ENCODE measurements at regions of chr2 and their contacts with region 1.

Region 1: DNA sequence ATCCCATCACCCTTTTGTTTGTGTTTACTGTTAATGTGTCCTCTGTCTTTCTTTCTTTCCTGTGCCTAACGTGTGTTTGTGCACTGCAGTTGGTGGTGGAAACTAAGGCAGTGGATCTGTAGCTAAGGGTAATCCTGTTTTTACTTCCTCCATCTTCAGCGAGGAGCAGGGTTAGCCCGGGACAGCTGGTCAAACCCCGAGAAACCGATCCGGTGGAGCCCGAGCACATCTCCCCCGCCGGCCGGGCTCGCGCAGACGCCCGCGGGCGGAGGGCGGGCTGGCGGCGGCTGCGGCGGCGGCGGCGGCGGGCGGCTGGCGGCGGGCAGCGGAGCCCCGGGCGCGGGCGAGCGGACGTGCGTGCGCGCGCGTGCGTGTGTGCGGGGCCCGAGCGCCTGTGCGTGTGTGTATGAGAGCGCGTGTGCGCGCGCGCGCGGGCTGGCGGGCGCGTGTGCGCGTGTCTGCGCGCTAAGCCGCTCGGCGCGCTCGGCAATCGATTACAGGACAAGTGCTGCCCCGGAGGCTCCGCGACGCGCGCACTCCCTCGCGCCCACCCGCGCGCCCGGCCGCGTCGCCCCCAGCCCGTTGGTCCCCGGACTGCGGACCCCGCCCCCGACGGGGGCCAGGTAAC is at the start of gene IKZF2:
- DNase-seq: peak; percentile 80 to 93
- ATAC-seq: peak; percentile 72 to 91 (median 79)
- H3K4me3 ChIP-seq: peak within 1 kb of the TSS; percentile 92
- H3K4me3 Mint-ChIP-seq: peak within 1 kb of the TSS; percentile 98
- H3K27ac ChIP-seq: peak within 1 kb of the TSS; percentile 96
- H3K27ac Mint-ChIP-seq: peak within 1 kb of the TSS; percentile 91 to 93
- H3K4me1 ChIP-seq: no peaks in the 10 kb centered on the region
- H3K4me1 Mint-ChIP-seq: peaks cover 55 to 64% of the 10 kb centered on the region in 2 donors
- H3K27me3 ChIP-seq: no peaks in the 10 kb centered on the region
- H3K27me3 Mint-ChIP-seq: no peaks in the 10 kb centered on the region
- CTCF ChIP-seq: no peak
- total RNA-seq, gene IKZF2: 74.4 to 162 (median 133) TPM

Region 2: GRCh38 chr2:212686285-212686895 is 465.2 kb before region 1 on chr2:
- intact Hi-C with region 1: loop called (anchors 1 kb)
- DNase-seq: peak; percentile 49 to 76
- ATAC-seq: peak; percentile 71 to 85 (median 76)
- H3K4me3 ChIP-seq: no peak overlapping the region
- H3K4me3 Mint-ChIP-seq: no peak overlapping the region
- H3K27ac ChIP-seq: no peak overlapping the region
- H3K27ac Mint-ChIP-seq: no peak overlapping the region
- H3K4me1 ChIP-seq: no peaks in the 10 kb centered on the region
- H3K4me1 Mint-ChIP-seq: no peaks in the 10 kb centered on the region
- H3K27me3 ChIP-seq: no peaks in the 10 kb centered on the region
- H3K27me3 Mint-ChIP-seq: peaks cover under 1 to 3% of the 10 kb centered on the region in 2 donors
- CTCF ChIP-seq: peak; percentile 92

Region 3: DNA sequence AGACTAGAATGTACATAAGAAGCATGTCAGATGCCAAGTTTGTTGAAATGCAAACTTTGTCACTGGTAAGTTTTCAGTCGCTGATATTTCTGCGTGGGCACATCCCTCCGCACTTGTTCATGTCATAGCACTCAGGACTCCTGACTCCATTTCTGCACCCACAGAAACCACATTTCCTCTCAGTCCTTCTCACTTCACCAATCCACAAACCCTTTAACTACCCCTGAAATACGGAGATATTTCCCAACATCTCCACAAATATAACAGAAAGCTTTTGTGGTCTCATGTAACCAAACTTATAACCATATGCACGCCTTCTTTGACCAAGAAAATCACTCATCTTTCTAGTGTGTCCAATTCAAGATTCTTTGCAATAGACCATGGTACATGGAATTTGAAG is 336.1 kb before region 1 on chr2:
- intact Hi-C with region 1: loop called (anchors 1 kb)
- DNase-seq: peak in 1 of 2 donors; percentile 38
- ATAC-seq: peak; percentile 43 to 75 (median 61)
- H3K4me3 ChIP-seq: no peak overlapping the region
- H3K4me3 Mint-ChIP-seq: peak overlapping the region; percentile 75
- H3K27ac ChIP-seq: peak overlapping the region; percentile 77
- H3K27ac Mint-ChIP-seq: peak overlapping the region; percentile 91
- H3K4me1 ChIP-seq: peaks cover 30% of the 10 kb centered on the region
- H3K4me1 Mint-ChIP-seq: peaks cover 78 to 79% of the 10 kb centered on the region in 2 donors
- H3K27me3 ChIP-seq: no peaks in the 10 kb centered on the region
- H3K27me3 Mint-ChIP-seq: no peaks in the 10 kb centered on the region
- CTCF ChIP-seq: no peak

Region 4: GRCh38 chr2:212958757-212959295 is 192.7 kb before region 1 on chr2:
- intact Hi-C with region 1: loop called (anchors 5 kb)
- DNase-seq: peak in 1 of 2 donors; percentile 27
- ATAC-seq: peak; percentile 48 to 60 (median 52)
- H3K4me3 ChIP-seq: no peak overlapping the region
- H3K4me3 Mint-ChIP-seq: peak overlapping the region; percentile 89
- H3K27ac ChIP-seq: peak overlapping the region; percentile 70
- H3K27ac Mint-ChIP-seq: peak overlapping the region; percentile 89 to 92
- H3K4me1 ChIP-seq: peaks cover 21% of the 10 kb centered on the region
- H3K4me1 Mint-ChIP-seq: peaks cover 64 to 73% of the 10 kb centered on the region in 2 donors
- H3K27me3 ChIP-seq: no peaks in the 10 kb centered on the region
- H3K27me3 Mint-ChIP-seq: no peaks in the 10 kb centered on the region
- CTCF ChIP-seq: no peak

Region 5: DNA sequence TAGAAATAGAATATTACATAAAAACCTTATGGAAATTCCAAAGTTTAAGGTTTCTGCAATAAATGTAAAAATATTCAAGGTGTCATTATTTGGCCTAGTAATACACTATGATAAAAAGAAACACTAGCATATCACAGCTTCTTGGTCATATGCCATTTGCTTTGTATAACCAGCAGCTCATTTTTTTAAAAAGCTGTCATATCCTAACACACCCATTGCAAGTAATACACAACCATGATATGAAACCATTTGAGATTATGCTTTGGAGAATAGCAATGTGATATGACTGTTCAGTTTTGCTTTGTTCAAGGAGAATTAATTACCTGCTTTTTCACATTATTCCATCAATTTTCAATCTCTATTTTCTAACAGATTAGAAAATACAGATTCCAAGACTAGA is 149.2 kb before region 1 on chr2:
- intact Hi-C with region 1: loop called (anchors 2 kb)
- DNase-seq: no peak
- ATAC-seq: peak; percentile 36 to 62 (median 57)
- H3K4me3 ChIP-seq: no peak overlapping the region
- H3K4me3 Mint-ChIP-seq: no peak overlapping the region
- H3K27ac ChIP-seq: no peak overlapping the region
- H3K27ac Mint-ChIP-seq: peak overlapping the region; percentile 89 to 96
- H3K4me1 ChIP-seq: no peaks in the 10 kb centered on the region
- H3K4me1 Mint-ChIP-seq: peaks cover 35 to 59% of the 10 kb centered on the region in 2 donors
- H3K27me3 ChIP-seq: no peaks in the 10 kb centered on the region
- H3K27me3 Mint-ChIP-seq: no peaks in the 10 kb centered on the region
- CTCF ChIP-seq: no peak

Region 6: DNA sequence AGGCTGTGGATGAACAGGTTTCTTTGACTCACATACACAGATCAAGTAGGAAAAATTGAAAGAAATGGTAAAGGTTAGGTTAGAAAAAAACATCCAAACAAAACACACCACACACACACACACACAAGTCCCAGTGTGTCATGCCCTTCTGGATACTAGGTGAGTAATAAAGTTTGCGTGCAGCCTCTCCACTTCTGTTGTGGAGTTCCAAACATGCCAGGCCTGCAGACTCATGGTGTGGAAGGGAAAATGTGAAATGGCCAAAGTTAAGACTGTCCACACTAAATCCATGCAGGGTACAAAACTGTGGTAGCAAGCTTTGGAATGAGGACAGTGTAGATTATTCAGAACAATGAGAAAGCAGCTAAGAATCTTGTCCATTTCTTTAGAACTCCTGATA is 114.7 kb before region 1 on chr2:
- intact Hi-C with region 1: loop called (anchors 5 kb)
- DNase-seq: no peak
- ATAC-seq: no peak
- H3K4me3 ChIP-seq: no peak overlapping the region
- H3K4me3 Mint-ChIP-seq: peak overlapping the region; percentile 83
- H3K27ac ChIP-seq: peak overlapping the region; percentile 82
- H3K27ac Mint-ChIP-seq: peak overlapping the region; percentile 25 to 94
- H3K4me1 ChIP-seq: peaks cover 24% of the 10 kb centered on the region
- H3K4me1 Mint-ChIP-seq: peaks cover 62% of the 10 kb centered on the region in 2 donors
- H3K27me3 ChIP-seq: no peaks in the 10 kb centered on the region
- H3K27me3 Mint-ChIP-seq: no peaks in the 10 kb centered on the region
- CTCF ChIP-seq: no peak

Region 7: DNA sequence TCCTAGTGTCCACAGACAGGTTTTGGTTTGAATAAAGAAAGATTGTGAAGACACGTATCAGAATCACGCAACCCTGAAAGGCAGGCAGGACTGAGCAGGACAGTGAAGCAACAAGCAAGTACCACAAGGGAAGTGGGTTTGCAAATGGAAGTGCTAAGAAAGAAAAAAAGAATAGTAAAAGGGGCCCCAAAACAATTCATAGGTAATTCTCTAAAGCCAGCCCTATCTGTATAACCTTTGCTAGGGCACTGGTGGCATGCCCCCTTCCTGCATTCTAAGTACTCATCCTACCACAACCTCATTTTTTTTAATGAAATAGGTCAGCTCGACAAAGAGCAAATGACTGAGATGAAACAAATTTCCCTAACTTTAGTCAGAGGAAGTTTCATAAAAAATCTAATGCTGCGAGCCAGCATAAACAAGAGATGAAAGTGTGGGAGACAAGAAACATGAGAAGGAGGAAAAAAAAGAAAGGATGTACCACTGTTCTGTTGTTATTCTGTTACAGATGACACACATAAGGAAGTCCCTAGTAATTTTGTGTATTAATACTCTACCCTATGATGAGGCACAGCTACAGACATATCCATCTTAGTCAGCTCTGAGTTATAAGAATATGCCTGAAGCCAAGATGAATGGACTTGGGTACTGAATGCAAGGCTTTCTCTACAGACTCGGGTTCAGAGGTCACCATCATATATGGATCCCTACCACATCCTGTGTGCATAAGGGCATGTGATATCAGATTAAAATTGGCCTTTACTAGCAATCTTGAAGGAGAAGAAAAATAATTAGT is 32.3 kb before region 1 on chr2:
- intact Hi-C with region 1: loop called (anchors 2 kb)
- DNase-seq: peak; percentile 20 to 57
- ATAC-seq: peak; percentile 82 to 83 (median 82)
- H3K4me3 ChIP-seq: no peak overlapping the region
- H3K4me3 Mint-ChIP-seq: peak overlapping the region; percentile 85
- H3K27ac ChIP-seq: peak overlapping the region; percentile 82
- H3K27ac Mint-ChIP-seq: peak overlapping the region; percentile 95 to 99
- H3K4me1 ChIP-seq: peaks cover 27% of the 10 kb centered on the region
- H3K4me1 Mint-ChIP-seq: peaks cover 67 to 74% of the 10 kb centered on the region in 2 donors
- H3K27me3 ChIP-seq: no peaks in the 10 kb centered on the region
- H3K27me3 Mint-ChIP-seq: no peaks in the 10 kb centered on the region
- CTCF ChIP-seq: no peak